HepG2 (cell line): ENCODE measurements at regions of chr15 and their contacts with region 1.

Region 1: DNA sequence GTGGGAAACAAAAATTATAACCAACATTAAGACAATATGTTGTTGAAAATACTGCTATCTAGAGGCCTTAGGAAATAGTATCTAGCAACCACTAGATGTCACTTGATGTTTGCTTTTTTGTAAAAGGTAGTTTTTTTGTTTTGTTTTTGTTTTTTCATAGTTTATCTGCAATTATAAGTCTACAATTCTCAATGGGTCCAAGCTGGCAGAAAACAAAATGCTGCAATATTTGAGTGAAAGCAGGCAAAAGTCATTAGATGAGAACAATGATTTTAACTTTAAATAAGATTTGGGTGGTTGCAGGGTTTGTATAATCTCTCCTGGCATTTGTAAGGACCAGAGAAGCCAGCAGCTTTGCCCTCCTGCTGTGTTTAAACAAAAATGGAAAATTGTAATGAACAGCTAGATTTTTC is 27.0 kb downstream of the DUT start:
- DNase-seq: no peak
- ATAC-seq: no peak
- H3K4me3 ChIP-seq: no peak overlapping the region
- H3K27ac ChIP-seq: no peak overlapping the region
- H3K4me1 ChIP-seq: peaks cover 19% of the 10 kb centered on the region
- H3K27me3 ChIP-seq: no peaks in the 10 kb centered on the region
- CTCF ChIP-seq: peak; percentile 57
- EP300 ChIP-seq: no peak
- POLR2A ChIP-seq: no peak
- RAD21 ChIP-seq: 0 out of 2 replicates have a peak, but pooled peaks have one; percentile 21

Region 2: DNA sequence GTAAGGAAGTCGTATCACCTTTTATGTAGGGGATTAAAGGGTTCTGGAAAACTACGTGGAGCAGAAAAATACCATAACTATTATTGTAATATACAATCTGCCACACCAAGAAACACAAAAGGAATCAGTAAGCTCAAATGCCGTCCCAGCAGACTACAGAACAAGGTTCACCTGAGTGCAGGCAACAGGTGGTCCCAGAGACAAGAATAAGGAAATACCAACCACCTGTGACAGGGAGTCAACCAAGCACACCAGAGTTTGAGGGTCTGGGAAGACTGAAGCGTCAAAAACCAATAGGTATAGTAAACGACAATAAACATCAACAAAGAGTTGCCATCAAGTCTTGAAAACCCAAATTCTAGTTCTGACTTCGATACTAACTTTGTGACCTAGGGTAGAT is 225.4 kb before region 1 on chr15:
- CTCF ChIA-PET with region 1: no interaction called
- POLR2A ChIA-PET with region 1: no interaction called
- in situ Hi-C with region 1: no loop called
- intact Hi-C with region 1: no loop called
- DNase-seq: no peak
- ATAC-seq: no peak
- H3K4me3 ChIP-seq: no peak overlapping the region
- H3K27ac ChIP-seq: no peak overlapping the region
- H3K4me1 ChIP-seq: no peaks in the 10 kb centered on the region
- H3K27me3 ChIP-seq: no peaks in the 10 kb centered on the region
- CTCF ChIP-seq: no peak
- EP300 ChIP-seq: no peak
- POLR2A ChIP-seq: no peak
- RAD21 ChIP-seq: no peak

Region 3: GRCh38 chr15:48221885-48222284 is 136.3 kb before region 1 on chr15:
- CTCF ChIA-PET with region 1: no interaction called
- POLR2A ChIA-PET with region 1: no interaction called
- in situ Hi-C with region 1: no loop called
- intact Hi-C with region 1: no loop called
- DNase-seq: no peak
- ATAC-seq: no peak
- H3K4me3 ChIP-seq: no peak overlapping the region
- H3K27ac ChIP-seq: no peak overlapping the region
- H3K4me1 ChIP-seq: no peaks in the 10 kb centered on the region
- H3K27me3 ChIP-seq: no peaks in the 10 kb centered on the region
- CTCF ChIP-seq: no peak
- EP300 ChIP-seq: no peak
- POLR2A ChIP-seq: no peak
- RAD21 ChIP-seq: no peak

Region 4: DNA sequence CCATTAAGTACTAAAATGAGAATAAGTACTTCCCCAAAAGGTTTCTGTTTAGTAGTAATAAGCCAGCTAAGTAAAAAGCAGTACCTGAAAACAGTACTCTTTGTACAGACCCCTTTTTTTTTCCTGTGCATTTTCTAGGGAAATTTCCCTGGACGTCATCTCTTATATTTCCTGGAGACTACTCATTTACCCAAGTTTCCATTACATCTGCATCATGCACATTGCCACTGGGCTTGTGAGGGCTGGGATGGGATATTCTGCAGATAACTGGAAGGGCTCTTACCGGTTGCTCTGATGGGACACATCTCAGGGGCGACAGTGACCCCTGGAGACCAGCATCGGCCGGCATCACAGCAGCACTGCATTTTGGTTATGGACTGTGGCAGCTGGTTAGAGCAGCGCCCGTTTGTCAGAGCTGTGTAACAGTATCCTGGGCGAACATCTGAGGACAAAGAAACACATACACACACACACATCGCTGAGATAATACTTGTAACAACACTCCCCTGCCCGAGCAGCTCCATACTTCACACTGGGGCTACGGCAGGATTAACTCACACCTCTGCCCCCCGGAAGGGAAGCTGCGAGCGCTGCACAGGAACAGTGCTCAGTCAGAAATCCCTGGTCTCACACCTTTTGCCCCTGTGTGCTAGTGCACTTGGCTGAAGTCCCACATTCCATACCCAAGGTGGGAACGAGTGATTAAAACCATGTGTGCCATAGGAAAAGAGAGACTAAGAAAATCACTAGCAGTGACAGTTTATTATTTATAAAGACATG is 162.3 kb after region 1 on chr15:
- CTCF ChIA-PET with region 1: interaction called, 8 read pairs
- POLR2A ChIA-PET with region 1: no interaction called
- in situ Hi-C with region 1: loop called (anchors 10 kb)
- intact Hi-C with region 1: loop called (anchors 1 kb)
- DNase-seq: peak; percentile 6
- ATAC-seq: peak; percentile 90
- H3K4me3 ChIP-seq: no peak overlapping the region
- H3K27ac ChIP-seq: no peak overlapping the region
- H3K4me1 ChIP-seq: no peaks in the 10 kb centered on the region
- H3K27me3 ChIP-seq: no peaks in the 10 kb centered on the region
- CTCF ChIP-seq: peak; percentile 58
- EP300 ChIP-seq: no peak
- POLR2A ChIP-seq: no peak
- RAD21 ChIP-seq: peak; percentile 51; the same call in 1 of the 2 replicates

Region 5: GRCh38 chr15:48645558-48646330 is 287.5 kb after region 1 on chr15 and contains the start of gene FBN1:
- CTCF ChIA-PET with region 1: no interaction called
- POLR2A ChIA-PET with region 1: no interaction called
- in situ Hi-C with region 1: no loop called
- intact Hi-C with region 1: loop called (anchors 5 kb)
- DNase-seq: peak; percentile 15
- ATAC-seq: peak; percentile 88
- H3K4me3 ChIP-seq: peak within 1 kb of the TSS; percentile 63 to 74 (median 64)
- H3K27ac ChIP-seq: no peak within 1 kb of the TSS
- H3K4me1 ChIP-seq: no peaks in the 10 kb centered on the region
- H3K27me3 ChIP-seq: peaks cover 2 to 29% of the 10 kb centered on the region in 2 experiments
- CTCF ChIP-seq: no peak
- EP300 ChIP-seq: no peak
- POLR2A ChIP-seq: no peak
- RAD21 ChIP-seq: no peak
- total RNA-seq, gene FBN1: 1.7 and 3.0 TPM in 2 replicates

Region 6: GRCh38 chr15:48800811-48801455 is 442.7 kb after region 1 on chr15:
- CTCF ChIA-PET with region 1: no interaction called
- POLR2A ChIA-PET with region 1: no interaction called
- in situ Hi-C with region 1: no loop called
- intact Hi-C with region 1: loop called (anchors 5 kb)
- DNase-seq: peak; percentile 26
- ATAC-seq: no peak
- H3K4me3 ChIP-seq: peak overlapping the region in 1 of 3 experiments; percentile 22; a peak in 2 of 6 replicates
- H3K27ac ChIP-seq: peak overlapping the region; percentile 56
- H3K4me1 ChIP-seq: peaks cover 21% of the 10 kb centered on the region
- H3K27me3 ChIP-seq: no peaks in the 10 kb centered on the region
- CTCF ChIP-seq: 0 out of 2 replicates have a peak, but pooled peaks have one; percentile 25
- EP300 ChIP-seq: no peak
- POLR2A ChIP-seq: no peak
- RAD21 ChIP-seq: no peak

Region 7: GRCh38 chr15:48855501-48856440 is 497.5 kb after region 1 on chr15:
- CTCF ChIA-PET with region 1: interaction called, 5 read pairs
- POLR2A ChIA-PET with region 1: no interaction called
- in situ Hi-C with region 1: no loop called
- intact Hi-C with region 1: loop called (anchors 1 kb)
- DNase-seq: peak; percentile 33
- ATAC-seq: peak; percentile 96
- H3K4me3 ChIP-seq: peak overlapping the region in 1 of 3 experiments; percentile 18; a peak in 1 of 6 replicates
- H3K27ac ChIP-seq: no peak overlapping the region
- H3K4me1 ChIP-seq: peaks cover 11% of the 10 kb centered on the region
- H3K27me3 ChIP-seq: no peaks in the 10 kb centered on the region; a peak in 1 of 5 replicates
- CTCF ChIP-seq: peak; percentile 68
- EP300 ChIP-seq: no peak
- POLR2A ChIP-seq: no peak
- RAD21 ChIP-seq: no peak